T-cell (primary cell): ENCODE measurements at regions of chr4 and their contacts with region 1.

Region 1: DNA sequence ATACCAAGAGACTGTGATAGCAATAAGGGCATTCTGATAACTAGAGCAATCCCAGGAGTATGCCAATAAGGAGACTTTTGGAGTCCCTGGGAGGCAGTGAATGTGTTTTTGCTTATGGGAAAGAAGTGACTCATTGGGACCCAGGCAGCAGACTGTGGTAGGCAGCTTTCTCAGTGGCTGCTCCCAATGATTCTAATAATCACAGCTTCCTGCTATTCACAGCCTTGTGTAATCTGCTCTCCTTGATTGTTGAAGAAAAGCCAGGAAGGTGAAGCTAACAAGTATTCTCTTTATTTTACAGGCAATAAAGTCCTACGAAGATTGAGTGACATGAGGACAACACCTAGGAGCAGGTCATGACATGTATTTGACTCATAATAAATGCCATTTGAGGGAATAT is 70.3 kb upstream of the DDX60 start:
- DNase-seq: no peak
- ATAC-seq: no peak
- H3K4me3 ChIP-seq: no peak overlapping the region
- H3K4me3 Mint-ChIP-seq: no peak overlapping the region
- H3K27ac ChIP-seq: no peak overlapping the region
- H3K27ac Mint-ChIP-seq: peak overlapping the region in 1 of 2 donors; percentile 5
- H3K4me1 ChIP-seq: no peaks in the 10 kb centered on the region
- H3K4me1 Mint-ChIP-seq: peaks cover 0 to 2% (median 0%) of the 10 kb centered on the region in 3 donors
- H3K27me3 ChIP-seq: no peaks in the 10 kb centered on the region
- H3K27me3 Mint-ChIP-seq: no peaks in the 10 kb centered on the region

Region 2: GRCh38 chr4:167767281-167767680 is 621.6 kb before region 1 on chr4:
- CTCF ChIA-PET with region 1: no interaction called
- POLR2A ChIA-PET with region 1: no interaction called
- DNase-seq: no peak
- ATAC-seq: no peak
- H3K4me3 ChIP-seq: no peak overlapping the region
- H3K4me3 Mint-ChIP-seq: no peak overlapping the region
- H3K27ac ChIP-seq: no peak overlapping the region
- H3K27ac Mint-ChIP-seq: no peak overlapping the region
- H3K4me1 ChIP-seq: no peaks in the 10 kb centered on the region
- H3K4me1 Mint-ChIP-seq: no peaks in the 10 kb centered on the region
- H3K27me3 ChIP-seq: no peaks in the 10 kb centered on the region
- H3K27me3 Mint-ChIP-seq: no peaks in the 10 kb centered on the region

Region 3: DNA sequence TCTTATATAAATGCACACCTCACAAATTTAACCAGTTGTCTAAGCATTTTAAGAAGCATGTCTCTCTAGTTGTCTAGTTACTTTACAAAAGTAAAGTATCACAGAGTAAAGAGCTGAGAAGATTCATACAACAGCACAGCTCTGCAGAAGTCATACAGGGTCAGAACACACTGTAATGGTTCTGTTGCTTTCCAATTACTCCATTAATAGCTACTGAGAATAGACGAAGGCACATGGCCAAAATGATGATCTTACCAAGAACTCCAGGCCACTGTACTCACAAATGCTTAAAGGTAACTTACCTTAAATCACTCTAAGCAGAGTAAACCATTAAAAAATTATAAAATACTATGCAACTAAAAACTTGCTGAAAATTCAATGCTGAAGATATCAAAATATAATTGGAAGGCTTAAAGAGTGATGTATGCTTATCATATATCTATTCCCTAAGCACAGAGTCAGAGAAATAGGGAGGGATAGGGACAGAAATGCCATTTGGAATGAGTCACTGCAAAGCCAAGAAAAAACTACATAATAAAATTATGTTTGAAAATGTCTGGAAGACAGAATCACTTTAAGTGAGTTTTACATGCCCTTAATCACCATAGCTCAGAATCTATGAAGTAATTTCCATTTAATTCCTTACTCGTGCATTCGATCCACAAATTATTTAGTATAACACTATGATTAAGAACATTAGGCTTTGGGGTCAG is 20.4 kb after region 1 on chr4:
- CTCF ChIA-PET with region 1: no interaction called
- POLR2A ChIA-PET with region 1: interaction called in 1 of 2 experiments, 10 read pairs
- DNase-seq: no peak
- ATAC-seq: no peak
- H3K4me3 ChIP-seq: no peak overlapping the region
- H3K4me3 Mint-ChIP-seq: no peak overlapping the region
- H3K27ac ChIP-seq: no peak overlapping the region
- H3K27ac Mint-ChIP-seq: no peak overlapping the region
- H3K4me1 ChIP-seq: no peaks in the 10 kb centered on the region
- H3K4me1 Mint-ChIP-seq: no peaks in the 10 kb centered on the region
- H3K27me3 ChIP-seq: no peaks in the 10 kb centered on the region
- H3K27me3 Mint-ChIP-seq: no peaks in the 10 kb centered on the region